Right cardiac atrium (tissue), 5 donors: ENCODE measurements at regions of chr13 and their contacts with region 1.

Region 1: GRCh38 chr13:77310579-77311279 is 16.2 kb downstream of the MYCBP2 start:
- DNase-seq: peak in 1 of 3 donors; percentile 51
- ATAC-seq: peak; percentile 52 to 67
- H3K4me3 ChIP-seq: no peak overlapping the region
- H3K27ac ChIP-seq: no peak overlapping the region
- H3K4me1 ChIP-seq: peaks cover 7% of the 10 kb centered on the region
- H3K27me3 ChIP-seq: no peaks in the 10 kb centered on the region

Region 2: DNA sequence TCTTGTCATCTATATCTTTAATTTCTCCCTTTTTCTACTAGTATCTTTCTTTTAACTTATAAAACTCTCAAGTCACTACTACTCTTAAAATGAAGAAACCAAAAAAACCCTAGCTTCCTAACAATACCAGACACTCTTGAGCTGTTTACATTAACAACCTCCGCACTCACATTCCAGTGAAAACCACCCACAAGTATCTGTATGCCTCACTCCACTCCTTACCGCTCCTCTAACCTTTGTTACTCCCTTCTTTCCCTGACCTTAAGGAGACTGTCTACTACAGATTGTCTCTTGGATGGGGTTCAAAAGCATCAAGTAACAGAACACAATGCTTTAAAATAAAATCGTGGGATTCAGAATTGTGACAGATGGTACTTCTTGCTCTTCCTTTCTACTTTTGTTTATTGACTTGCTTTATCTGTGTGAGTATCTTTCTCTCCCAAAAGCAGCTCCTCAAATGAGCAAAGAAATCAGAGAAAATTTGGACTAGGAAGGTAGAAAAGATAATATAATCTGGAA is 173.8 kb before region 1 on chr13:
- intact Hi-C with region 1: no loop called
- DNase-seq: no peak
- ATAC-seq: no peak
- H3K4me3 ChIP-seq: no peak overlapping the region
- H3K27ac ChIP-seq: no peak overlapping the region
- H3K4me1 ChIP-seq: no peaks in the 10 kb centered on the region
- H3K27me3 ChIP-seq: no peaks in the 10 kb centered on the region

Region 3: DNA sequence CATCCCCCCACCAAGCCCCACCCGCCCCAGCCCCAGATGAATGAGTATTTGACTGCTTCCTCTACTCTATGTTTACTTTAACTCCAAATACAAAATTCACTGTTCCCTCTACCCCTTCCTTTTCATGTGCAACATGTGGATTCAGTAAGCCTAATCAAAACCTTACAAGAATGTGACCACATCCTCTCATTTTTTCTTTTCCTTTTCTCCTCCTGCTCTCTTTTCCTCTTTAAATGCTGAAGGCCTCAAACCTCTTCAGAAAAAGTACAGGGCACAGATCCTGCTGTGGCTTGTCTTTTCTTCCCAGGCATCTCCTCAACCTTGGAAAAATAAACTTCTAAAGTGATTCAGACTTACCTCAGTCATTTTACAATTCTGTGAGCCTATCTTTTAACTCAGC is 102.8 kb before region 1 on chr13:
- intact Hi-C with region 1: no loop called
- DNase-seq: no peak
- ATAC-seq: no peak
- H3K4me3 ChIP-seq: no peak overlapping the region
- H3K27ac ChIP-seq: no peak overlapping the region
- H3K4me1 ChIP-seq: no peaks in the 10 kb centered on the region
- H3K27me3 ChIP-seq: no peaks in the 10 kb centered on the region

Region 4: DNA sequence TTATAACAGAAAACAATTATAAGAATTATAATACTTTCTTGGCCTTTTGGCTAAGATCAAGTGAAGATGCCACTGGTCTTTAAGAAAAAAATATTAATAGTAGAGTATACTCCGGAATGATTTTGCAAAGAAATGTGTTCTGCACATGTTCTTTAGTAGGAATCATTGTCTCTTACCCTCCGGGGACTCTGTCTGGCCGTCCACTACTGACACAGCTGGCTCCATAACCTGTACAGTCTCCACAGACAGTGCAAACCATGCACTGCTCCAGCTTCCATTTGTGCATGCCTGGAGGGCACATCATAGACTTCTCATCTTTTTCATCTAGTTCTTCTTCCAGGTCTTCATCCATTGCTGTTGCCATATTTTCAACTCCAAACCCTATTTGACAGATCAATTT is 59.8 kb before region 1 on chr13:
- intact Hi-C with region 1: loop called in 1 of 4 experiments (anchors 10 kb)
- DNase-seq: no peak
- ATAC-seq: no peak
- H3K4me3 ChIP-seq: no peak overlapping the region
- H3K27ac ChIP-seq: no peak overlapping the region
- H3K4me1 ChIP-seq: no peaks in the 10 kb centered on the region
- H3K27me3 ChIP-seq: no peaks in the 10 kb centered on the region